ENCODE measurements at regions of chr4 and their contacts with region 1.

Region 1: DNA sequence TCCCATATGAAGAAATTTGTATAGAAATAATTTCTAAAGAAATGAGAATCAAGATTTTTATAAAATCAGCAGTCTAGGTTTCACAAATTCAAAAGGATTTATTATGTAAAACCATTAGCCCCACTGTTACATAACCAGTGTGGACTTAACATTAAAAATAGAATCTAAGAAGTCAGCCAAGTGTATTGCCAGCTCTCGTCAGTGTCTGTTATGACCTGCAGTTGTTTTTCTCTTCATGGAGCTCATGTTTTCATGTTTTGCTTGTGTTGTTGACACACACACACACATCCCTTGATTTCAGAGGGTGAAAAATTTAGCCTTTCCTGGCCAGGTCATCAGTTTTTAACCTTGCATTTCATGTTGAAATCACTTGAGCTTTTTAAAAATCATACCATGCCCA is 39.5 kb downstream of the USP38 start:
- DNase-seq: no peak
- H3K4me3 ChIP-seq: no peak overlapping the region
- H3K27ac ChIP-seq: no peak overlapping the region
- H3K4me1 ChIP-seq: no peaks in the 10 kb centered on the region
- H3K27me3 ChIP-seq: no peaks in the 10 kb centered on the region
- CTCF ChIP-seq: no peak
- POLR2A ChIP-seq: no peak

Region 2: GRCh38 chr4:143286701-143287571 is 62.7 kb after region 1 on chr4:
- intact Hi-C with region 1: loop called (anchors 5 kb)
- DNase-seq: no peak
- H3K4me3 ChIP-seq: peak overlapping the region in 1 of 3 donors; percentile 2
- H3K27ac ChIP-seq: peak overlapping the region; percentile 48 to 57
- H3K4me1 ChIP-seq: no peaks in the 10 kb centered on the region
- H3K27me3 ChIP-seq: no peaks in the 10 kb centered on the region
- CTCF ChIP-seq: no peak
- POLR2A ChIP-seq: no peak